AG04450 (cell line): ENCODE measurements at regions of chr9 and their contacts with region 1.

Region 1: GRCh38 chr9:107489687-107490605 is at the start of gene KLF4:
- DNase-seq: peak; percentile 85
- H3K4me3 ChIP-seq: peak within 1 kb of the TSS; percentile 74
- H3K27ac ChIP-seq: peak within 1 kb of the TSS; percentile 75
- H3K27me3 ChIP-seq: peaks cover 21% of the 10 kb centered on the region
- CTCF ChIP-seq: no peak
- polyA plus RNA-seq, gene KLF4: 3.1 TPM in 2 replicates

Region 2: GRCh38 chr9:107504569-107505377 is 14.8 kb after region 1 on chr9:
- CTCF ChIA-PET with region 1: no interaction called
- POLR2A ChIA-PET with region 1: no interaction called
- DNase-seq: peak; percentile 43
- H3K4me3 ChIP-seq: no peak overlapping the region
- H3K27ac ChIP-seq: peak overlapping the region; percentile 52
- H3K27me3 ChIP-seq: no peaks in the 10 kb centered on the region
- CTCF ChIP-seq: no peak

Region 3: DNA sequence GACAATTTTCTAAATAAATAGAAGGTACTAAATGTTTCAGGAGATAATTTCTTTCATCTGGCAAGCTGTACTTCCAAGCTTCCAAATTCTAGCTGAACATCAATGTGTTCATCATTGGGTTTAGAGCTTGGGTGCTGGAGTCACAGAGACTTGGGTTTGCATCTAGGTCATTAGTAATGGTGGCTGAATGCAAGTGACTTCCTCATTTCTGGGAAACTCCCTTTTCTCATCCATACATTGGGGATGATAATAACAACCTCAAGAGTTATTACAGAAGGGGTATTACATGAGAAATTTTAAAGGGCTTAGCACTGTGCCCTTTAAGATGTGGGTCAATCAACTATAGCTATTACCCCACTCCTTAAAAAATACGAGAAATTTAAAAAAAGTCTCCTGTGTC is 40.7 kb after region 1 on chr9:
- CTCF ChIA-PET with region 1: no interaction called
- POLR2A ChIA-PET with region 1: no interaction called
- DNase-seq: no peak
- H3K4me3 ChIP-seq: no peak overlapping the region
- H3K27ac ChIP-seq: no peak overlapping the region
- H3K27me3 ChIP-seq: no peaks in the 10 kb centered on the region
- CTCF ChIP-seq: no peak

Region 4: GRCh38 chr9:107548048-107548800 is 58.3 kb after region 1 on chr9:
- CTCF ChIA-PET with region 1: no interaction called
- POLR2A ChIA-PET with region 1: no interaction called
- DNase-seq: peak; percentile 61
- H3K4me3 ChIP-seq: peak overlapping the region; percentile 22; the same call in 1 of the 2 replicates
- H3K27ac ChIP-seq: peak overlapping the region; percentile 86
- H3K27me3 ChIP-seq: no peaks in the 10 kb centered on the region
- CTCF ChIP-seq: no peak

Region 5: DNA sequence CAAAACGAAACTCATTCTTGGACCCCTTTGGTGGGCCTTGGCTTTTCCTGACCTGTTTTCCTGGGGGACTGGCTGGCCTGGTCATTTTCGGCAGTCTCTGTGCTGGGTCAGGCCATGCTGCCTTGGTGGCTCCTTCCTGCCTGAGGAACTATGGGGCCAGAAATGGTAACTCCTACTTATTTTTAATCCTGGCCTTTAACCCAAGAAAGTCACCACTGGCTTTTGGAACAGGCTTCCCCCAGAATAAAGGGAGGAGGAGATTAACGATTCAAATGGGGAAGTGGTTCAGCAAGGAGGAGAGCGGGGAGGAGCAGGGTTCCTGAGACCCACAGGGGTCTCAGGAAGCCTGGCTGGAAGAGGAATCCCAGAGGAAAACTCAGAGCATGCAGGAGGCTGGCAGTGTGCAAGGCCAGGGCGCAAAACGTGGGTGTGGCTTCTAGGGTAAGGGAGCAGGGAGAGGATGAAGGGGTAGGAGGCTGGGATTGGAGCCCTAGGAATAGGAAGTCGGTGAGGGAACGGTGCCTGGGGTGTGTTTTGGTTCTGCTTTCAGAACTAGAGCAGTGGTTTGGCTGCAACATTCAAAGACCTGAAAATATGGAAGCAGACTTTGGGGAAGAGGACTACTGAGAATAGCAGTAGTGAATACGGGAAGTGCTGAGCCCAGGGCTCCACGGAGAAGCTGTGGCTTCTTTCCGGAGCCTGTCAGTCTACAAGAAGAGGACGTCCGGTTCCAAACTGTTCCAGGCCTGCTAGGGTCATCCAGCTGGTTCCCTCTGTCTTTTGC is 270.7 kb after region 1 on chr9:
- CTCF ChIA-PET with region 1: no interaction called
- POLR2A ChIA-PET with region 1: interaction called, 11 read pairs
- DNase-seq: no peak
- H3K4me3 ChIP-seq: no peak overlapping the region
- H3K27ac ChIP-seq: no peak overlapping the region
- H3K27me3 ChIP-seq: no peaks in the 10 kb centered on the region
- CTCF ChIP-seq: no peak